Cardiac septum (tissue), 1 donor: ENCODE measurements at regions of chr2 and their contacts with region 1.

Region 1: DNA sequence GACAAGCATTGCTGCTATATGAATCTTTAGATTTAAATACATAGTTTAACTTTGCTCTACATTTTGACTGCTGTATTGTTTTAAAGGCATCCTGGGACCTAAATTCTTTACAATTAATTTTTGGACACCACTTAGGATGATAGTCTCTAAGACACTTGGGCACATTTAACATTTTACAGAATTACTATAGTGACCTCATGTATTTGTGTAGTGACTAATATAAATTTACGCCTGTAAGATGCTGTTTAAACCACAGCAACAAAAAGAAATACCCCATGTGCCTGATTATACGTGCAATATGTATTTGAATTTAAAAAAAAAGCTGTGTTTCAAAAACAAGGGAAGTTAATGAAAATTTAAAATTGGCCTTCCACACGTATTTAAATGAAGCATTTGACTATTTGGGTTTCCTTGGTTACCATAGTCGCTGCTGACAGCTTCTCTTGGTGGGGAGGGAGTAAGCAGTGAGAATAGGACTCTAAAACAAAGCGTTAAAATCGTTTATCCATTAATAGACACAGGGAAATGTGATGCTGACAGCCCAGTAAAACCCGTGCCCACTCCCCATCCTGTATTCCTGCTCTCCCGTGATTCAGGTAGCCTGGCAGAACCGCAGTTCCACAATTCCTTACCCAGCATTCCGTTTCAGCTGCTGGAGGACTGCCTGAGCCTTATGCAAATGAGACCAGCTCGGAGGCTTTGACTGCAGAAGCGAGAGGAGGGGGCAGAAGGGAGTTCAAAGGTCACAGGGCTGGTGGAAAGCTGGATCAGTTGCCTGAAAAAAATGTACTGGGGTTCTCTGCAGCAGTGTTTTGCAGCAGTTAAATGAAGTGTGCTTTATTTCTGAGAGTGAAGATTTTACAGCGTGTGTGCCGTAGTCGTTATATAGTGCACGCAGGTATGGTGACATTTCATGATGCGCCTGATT is 104.3 kb downstream of the CSRNP3 start:
- DNase-seq: no peak

Region 2: DNA sequence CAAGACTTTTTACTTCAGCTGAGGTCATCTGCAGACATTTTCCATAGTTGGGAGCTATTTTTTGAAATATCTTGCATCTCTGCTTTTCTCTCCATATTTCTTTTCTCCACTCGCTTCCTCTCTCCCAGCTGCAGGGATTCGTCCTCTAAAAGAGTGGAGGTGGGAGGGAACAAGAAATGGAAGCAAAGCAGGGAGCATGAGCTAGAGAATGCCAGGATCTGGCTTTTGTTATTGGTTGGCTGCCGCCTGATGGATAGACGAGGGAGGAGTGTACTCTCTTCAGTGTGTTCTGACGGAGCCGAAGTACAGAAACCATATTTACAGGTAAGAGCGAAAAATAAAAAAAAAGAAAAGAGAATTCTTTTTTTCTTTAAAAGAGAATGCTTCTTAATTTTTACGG is 104.4 kb before region 1 on chr2 and contains the start of gene CSRNP3:
- intact Hi-C with region 1: loop called (anchors 5 kb)
- DNase-seq: peak; percentile 77
- total RNA-seq, gene CSRNP3: 2.9 TPM

Region 3: DNA sequence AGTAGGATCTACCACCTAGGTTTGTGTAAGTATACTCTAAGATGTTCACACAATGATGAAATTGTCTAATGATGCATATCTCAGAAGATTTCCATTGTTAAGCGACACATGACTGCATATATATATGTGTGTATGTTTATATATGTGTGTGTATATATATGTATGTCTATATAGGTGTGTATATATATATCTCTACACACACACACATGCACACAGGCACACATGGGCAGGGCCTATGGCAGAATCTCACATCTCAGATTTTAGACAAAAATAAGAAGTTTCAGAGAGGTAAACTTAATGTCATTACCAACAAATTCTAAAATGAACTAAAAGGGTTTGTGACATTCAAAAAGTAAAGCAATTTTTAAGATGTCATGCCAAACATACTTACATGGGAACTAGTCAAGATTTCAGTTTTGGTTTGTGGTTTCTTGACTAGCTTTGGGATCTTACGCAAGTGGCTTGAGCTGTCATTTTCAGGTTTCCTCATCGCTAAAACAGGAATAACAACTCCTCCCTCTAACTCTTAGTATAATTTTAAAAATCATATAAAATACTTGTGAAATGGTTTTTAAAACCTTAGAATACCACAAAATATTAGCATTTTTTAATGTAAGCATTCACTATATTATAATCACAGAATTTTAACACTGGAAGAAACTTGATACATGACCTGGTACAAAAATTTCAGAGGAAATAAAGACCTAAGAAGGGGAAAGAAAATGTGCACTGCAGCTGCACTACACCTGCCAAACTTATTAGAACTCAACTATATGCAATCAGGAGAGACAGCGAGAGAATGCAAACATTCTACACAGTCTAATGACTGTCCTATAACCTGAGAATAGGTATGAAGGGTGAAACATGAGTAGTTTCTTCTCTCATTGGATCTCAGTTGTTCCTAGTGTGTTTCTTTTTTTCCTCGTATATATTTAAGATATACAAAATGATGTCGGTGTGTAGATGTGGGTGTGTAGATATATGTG is 304.1 kb after region 1 on chr2:
- intact Hi-C with region 1: no loop called
- DNase-seq: no peak